ENCODE measurements at regions of chr18 and their contacts with region 1.

Region 1: DNA sequence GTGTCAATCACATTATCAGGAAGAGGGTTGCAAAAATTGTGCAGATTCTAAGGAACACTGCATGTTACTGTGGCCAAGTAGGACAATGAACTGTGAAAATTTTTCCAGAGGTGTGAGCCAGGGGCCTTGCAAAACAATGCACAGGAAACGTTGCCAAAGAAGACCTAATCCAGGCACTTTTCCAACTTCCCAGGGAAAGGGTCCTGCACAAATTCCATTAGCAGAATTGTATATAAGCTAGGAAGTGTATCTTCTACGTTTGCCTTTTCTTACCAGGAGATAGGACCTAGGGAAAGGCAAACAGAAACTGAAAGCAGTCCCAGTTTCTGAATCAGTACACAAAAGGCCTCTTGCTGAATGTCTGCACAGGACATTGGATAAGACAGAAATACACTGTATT is 1888.3 kb upstream of the CELF4 start:
- DNase-seq: no peak
- ATAC-seq: no peak
- H3K4me3 ChIP-seq: no peak overlapping the region
- H3K4me3 Mint-ChIP-seq: no peak overlapping the region
- H3K27ac ChIP-seq: no peak overlapping the region
- H3K27ac Mint-ChIP-seq: no peak overlapping the region
- H3K4me1 ChIP-seq: no peaks in the 10 kb centered on the region
- H3K4me1 Mint-ChIP-seq: no peaks in the 10 kb centered on the region
- H3K27me3 ChIP-seq: no peaks in the 10 kb centered on the region
- H3K27me3 Mint-ChIP-seq: no peaks in the 10 kb centered on the region
- CTCF ChIP-seq: no peak

Region 2: DNA sequence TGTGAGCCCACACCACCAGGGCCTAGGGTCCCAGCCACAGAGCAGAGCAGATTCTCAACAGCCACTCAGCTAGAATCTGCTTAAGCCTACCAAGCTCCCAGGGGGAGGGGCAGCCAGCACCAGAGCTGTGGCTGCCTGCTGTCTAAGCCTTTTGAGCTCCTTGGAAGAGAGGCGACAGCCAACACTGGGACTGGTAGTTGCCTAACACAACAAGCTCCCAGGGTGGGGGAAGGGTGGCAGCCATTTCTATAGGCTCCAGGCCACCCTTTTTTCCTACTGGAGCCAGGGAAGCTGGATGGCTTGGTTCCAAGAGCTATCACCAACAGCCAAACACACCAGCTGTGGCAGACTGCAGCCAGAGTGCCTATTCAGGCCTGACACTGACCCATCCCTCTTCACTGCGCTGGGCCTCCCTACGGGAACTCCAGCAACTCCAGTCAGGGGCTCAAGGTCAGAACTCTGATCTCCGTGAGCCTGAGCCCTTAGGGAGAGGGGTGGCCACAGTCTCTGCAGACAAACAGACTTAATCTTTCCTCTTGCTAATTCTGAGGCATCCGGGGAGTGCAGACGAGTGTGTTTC is 64.0 kb before region 1 on chr18:
- CTCF ChIA-PET with region 1: no interaction called
- POLR2A ChIA-PET with region 1: no interaction called
- intact Hi-C with region 1: loop called in 1 of 2 experiments (anchors 10 kb)
- DNase-seq: no peak
- ATAC-seq: no peak
- H3K4me3 ChIP-seq: no peak overlapping the region
- H3K4me3 Mint-ChIP-seq: no peak overlapping the region
- H3K27ac ChIP-seq: no peak overlapping the region
- H3K27ac Mint-ChIP-seq: no peak overlapping the region
- H3K4me1 ChIP-seq: no peaks in the 10 kb centered on the region
- H3K4me1 Mint-ChIP-seq: no peaks in the 10 kb centered on the region
- H3K27me3 ChIP-seq: no peaks in the 10 kb centered on the region
- H3K27me3 Mint-ChIP-seq: no peaks in the 10 kb centered on the region
- CTCF ChIP-seq: no peak

Measured in CD8-positive, alpha-beta T cell (primary cell).